CD8-positive, alpha-beta T cell (primary cell): ENCODE measurements at regions of chr10 and their contacts with region 1.

Region 1: DNA sequence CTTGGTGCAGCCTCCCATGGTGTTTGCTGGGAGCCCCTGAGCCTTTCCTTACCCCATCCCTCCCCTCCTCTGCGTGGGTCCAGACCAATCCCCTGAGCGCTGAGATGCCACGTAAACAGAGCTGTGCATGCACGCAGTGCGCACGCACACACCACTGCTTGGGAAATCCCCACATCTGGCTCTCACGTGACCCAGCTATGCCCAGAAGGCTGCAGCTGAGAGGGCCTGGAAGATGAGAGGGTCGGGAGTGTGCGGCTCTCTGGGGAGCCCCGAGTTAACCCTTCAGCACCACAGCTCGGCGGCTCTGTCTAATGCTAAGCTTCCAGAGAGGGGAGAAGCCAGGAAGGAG is 177.2 kb downstream of the SH3PXD2A start:
- DNase-seq: peak; percentile 66 to 98 (median 80)
- ATAC-seq: peak; percentile 97
- H3K4me3 ChIP-seq: peak overlapping the region; percentile 54 to 56
- H3K4me3 Mint-ChIP-seq: peak overlapping the region; percentile 85
- H3K27ac ChIP-seq: peak overlapping the region; percentile 45 to 93
- H3K27ac Mint-ChIP-seq: peak overlapping the region; percentile 94
- H3K4me1 ChIP-seq: peaks cover 26% of the 10 kb centered on the region
- H3K4me1 Mint-ChIP-seq: peaks cover 20% of the 10 kb centered on the region
- H3K27me3 ChIP-seq: no peaks in the 10 kb centered on the region
- H3K27me3 Mint-ChIP-seq: no peaks in the 10 kb centered on the region
- CTCF ChIP-seq: no peak

Region 2: DNA sequence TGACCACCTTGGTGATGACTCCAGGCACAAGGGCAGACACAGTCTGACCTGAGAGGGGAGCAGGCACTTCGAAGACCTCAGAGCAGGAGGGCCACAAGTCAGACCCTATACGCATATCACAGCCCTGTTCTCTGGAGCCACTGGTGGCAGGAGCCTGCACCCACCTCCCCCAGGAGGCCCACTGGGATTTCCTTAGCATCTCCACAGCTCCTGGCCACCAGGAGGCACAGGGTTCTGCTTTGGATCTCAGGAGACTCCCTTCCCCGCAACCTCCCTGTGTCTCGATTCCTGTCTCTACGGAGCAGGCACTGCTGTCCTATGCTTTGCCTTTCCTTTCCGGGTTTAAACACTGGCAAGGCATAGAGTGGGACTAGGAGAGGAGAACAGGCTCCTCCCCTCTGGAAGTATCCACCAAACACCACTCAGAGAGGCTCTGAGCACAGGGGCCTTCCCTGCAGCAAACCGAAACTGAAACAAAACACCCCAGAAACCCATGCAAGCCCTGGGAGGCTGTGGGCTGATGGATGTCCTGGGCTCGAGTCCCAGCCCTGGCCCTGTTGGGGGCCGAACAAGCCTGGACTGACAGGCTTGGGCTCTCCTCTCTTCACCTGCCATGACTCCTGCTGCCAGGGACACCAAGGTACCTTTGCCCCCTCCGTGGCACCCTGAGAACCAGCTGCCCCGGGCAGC is 18.3 kb before region 1 on chr10:
- CTCF ChIA-PET with region 1: interaction called, 4 read pairs
- POLR2A ChIA-PET with region 1: interaction called, 12 read pairs
- intact Hi-C with region 1: loop called in 1 of 2 experiments (anchors 1 kb)
- DNase-seq: peak in 8 of 9 experiments; percentile 34 to 81 (median 57)
- ATAC-seq: peak; percentile 75
- H3K4me3 ChIP-seq: peak overlapping the region; percentile 79 to 99
- H3K4me3 Mint-ChIP-seq: peak overlapping the region; percentile 87
- H3K27ac ChIP-seq: peak overlapping the region; percentile 68 to 76
- H3K27ac Mint-ChIP-seq: peak overlapping the region; percentile 86
- H3K4me1 ChIP-seq: peaks cover 16% of the 10 kb centered on the region
- H3K4me1 Mint-ChIP-seq: peaks cover 11% of the 10 kb centered on the region
- H3K27me3 ChIP-seq: no peaks in the 10 kb centered on the region
- H3K27me3 Mint-ChIP-seq: no peaks in the 10 kb centered on the region
- CTCF ChIP-seq: no peak